HEK293T (cell line): ENCODE measurements at regions of chr1 and their contacts with region 1.

Region 1: GRCh38 chr1:173852105-173852504 is 15.7 kb downstream of the GAS5 start:
- DNase-seq: no peak

Region 2: GRCh38 chr1:173867753-173868265 is 15.7 kb after region 1 on chr1 and contains the start of gene GAS5:
- CTCF ChIA-PET with region 1: no interaction called
- POLR2A ChIA-PET with region 1: interaction called, 12 read pairs
- DNase-seq: peak; percentile 99

Region 3: DNA sequence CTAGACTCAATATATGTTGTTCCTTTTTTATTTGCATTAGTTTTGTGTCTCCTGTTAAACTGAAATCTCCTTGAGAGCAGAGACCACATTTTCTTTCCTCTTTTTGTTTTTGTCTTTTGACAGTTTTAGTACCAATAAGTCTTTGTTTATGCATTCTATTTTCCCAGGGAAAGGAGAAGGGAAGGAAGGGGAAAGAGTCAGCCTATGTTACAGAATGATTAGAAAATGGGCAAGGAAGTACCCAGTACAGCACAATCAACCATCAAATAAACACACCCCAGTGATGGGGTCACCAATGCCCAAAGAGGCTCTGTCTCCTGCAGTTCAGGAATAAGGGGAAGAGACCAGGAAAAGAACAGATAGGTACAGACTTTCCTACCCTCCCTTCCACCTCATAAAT is 26.1 kb after region 1 on chr1:
- CTCF ChIA-PET with region 1: no interaction called
- POLR2A ChIA-PET with region 1: no interaction called
- DNase-seq: no peak